Transverse colon (tissue), 4 donors: ENCODE measurements at regions of chr19 and their contacts with region 1.

Region 1: DNA sequence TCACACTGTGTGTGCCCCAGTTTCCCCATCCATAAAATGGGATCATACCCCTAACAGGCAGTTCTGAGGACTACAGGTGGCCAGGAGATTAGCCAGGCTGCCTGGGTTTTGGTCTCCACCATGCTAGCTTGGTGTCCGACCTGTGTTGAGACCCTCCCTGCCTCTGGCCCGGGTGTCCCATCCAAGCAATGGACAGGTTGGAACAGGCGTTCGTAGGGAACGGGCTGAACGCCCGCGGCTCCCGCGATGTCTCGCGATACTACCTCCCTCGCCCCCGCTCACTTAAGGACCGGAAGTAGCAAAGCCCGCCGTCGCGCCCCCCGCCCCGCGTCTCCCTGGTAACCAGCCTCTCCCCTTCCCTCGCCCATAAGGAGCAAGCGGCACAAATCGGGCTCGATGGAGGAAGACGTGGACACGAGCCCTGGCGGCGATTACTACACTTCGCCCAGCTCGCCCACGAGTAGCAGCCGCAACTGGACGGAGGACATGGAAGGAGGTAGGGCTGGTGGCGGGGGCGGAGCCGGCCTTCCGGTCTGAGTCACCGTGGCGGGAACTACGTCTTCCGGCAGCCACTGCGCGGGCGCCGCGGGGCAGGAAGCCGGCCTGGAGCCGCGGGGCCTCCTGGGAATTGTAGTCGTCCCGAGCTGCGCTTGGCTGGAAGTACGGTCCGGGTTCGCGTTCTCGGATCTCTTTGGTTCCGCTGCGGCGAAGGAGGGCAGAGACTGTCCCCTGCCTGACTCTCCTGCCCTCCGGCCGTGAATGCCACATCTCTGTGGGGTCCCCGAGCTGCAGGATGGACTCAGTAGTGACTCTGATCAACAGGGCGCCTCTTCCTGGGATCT is 45.4 kb downstream of the SMIM24 start:
- DNase-seq: peak; percentile 96
- H3K4me3 ChIP-seq: peak overlapping the region in 3 of 4 donors; percentile 33 to 57 (median 39)
- H3K27ac ChIP-seq: peak overlapping the region; percentile 84 to 90 (median 88)
- H3K4me1 ChIP-seq: peaks cover 13 to 31% (median 18%) of the 10 kb centered on the region in 4 donors
- H3K27me3 ChIP-seq: no peaks in the 10 kb centered on the region
- CTCF ChIP-seq: peak in 1 of 5 experiments; percentile 16
- EP300 ChIP-seq: no peak
- POLR2A ChIP-seq: peak; percentile 44

Region 2: DNA sequence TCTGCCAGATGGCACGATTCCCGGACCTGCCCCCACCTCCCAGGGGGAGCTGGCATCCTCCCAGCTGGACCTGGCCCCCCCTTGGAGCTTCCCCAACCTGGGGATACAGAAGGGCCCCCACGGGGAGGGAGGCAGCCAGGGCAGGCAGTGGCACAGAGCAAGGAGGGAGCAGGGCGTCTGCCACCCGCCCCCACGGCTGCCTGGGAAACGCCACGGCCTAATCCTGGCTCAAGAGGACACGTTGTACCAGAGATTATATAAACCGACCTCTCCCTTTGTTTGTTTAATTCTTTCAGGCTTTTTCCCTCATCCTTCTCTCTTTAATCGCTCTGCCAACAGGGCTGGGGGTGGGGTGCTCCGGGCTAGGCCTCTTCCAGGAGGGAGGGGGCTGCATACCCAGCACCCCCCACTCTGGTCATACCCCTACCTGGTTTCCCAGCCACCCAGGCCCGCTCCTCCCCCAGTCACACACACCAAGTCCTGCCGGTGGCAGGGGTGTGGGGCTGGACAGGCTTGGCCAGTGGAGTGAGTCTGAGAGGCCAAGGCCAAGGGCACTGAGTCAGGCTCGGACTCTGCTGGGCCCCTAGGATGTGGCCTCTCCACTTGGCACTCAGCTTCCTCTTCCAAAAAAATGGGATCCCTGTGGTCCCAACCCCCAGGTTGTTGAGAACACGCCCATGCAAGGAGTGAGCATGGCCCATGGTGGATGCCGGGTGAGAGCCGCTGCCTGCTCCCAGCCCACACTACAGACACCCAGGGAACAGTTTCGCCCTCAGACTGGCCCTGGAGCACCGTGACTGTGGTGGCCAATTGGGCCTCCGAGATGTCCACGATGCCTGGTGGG is 98.0 kb before region 1 on chr19:
- in situ Hi-C with region 1: no loop called
- intact Hi-C with region 1: loop called (anchors 5 kb)
- DNase-seq: peak; percentile 94
- H3K4me3 ChIP-seq: no peak overlapping the region
- H3K27ac ChIP-seq: peak overlapping the region; percentile 92 to 97 (median 94)
- H3K4me1 ChIP-seq: peaks cover 43 to 57% (median 46%) of the 10 kb centered on the region in 4 donors
- H3K27me3 ChIP-seq: no peaks in the 10 kb centered on the region
- CTCF ChIP-seq: peak in 1 of 5 experiments; percentile 12
- EP300 ChIP-seq: peak; percentile 98
- POLR2A ChIP-seq: peak; percentile 53